ENCODE measurements at regions of chr12 and their contacts with region 1.

Region 1: DNA sequence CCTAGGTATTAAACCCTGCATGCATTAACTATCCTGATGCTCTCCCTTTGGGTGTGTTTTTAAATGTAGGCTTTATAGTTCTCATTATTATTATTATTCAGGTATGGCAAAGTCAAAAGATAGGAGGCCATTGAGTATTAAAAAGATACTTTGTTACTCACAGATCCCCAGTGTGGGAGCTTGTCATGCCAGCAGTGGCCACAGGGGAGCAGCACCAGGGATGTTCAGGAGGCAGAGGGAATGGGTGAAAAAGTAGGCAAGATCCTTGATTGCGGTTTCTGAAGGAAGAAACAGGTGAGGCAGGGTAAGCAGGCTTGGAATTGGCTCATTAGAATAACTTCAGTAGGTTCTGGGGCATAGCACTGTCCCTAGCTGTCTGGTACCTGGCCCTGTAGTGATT is 382.2 kb downstream of the MED13L start:
- DNase-seq: no peak
- ATAC-seq: peak; percentile 78
- H3K4me3 ChIP-seq: no peak overlapping the region
- H3K27ac ChIP-seq: no peak overlapping the region
- H3K4me1 ChIP-seq: no peaks in the 10 kb centered on the region
- H3K27me3 ChIP-seq: no peaks in the 10 kb centered on the region
- CTCF ChIP-seq: peak in 2 of 3 experiments; percentile 70 to 83; a peak in 4 of 6 replicates
- POLR2A ChIP-seq: no peak
- RAD21 ChIP-seq: peak; percentile 34; the same call in 1 of the 2 replicates

Region 2: DNA sequence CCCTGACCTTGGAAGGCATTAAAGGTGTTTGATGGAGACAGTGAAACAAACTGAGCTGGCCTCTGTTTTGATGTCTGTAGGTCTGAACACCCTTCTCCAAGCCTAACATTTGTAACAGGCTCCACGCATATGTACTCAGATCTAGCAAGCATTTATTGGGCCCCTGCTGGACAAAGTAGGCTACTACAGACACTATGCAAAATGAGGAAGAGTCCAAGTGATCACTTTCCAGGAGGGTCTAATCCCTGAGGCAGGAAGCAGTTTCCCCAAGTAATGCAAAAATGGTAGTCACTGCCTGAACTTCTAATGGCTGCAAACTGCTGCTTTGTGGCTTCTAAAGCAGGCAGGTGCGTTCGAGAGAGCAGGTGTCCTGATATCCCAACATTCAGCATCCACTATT is 23.5 kb before region 1 on chr12:
- CTCF ChIA-PET with region 1: interaction called, 12 read pairs
- POLR2A ChIA-PET with region 1: no interaction called
- RAD21 ChIA-PET with region 1: no interaction called
- intact Hi-C with region 1: no loop called
- DNase-seq: peak; percentile 58
- ATAC-seq: peak; percentile 87
- H3K4me3 ChIP-seq: peak overlapping the region in 1 of 2 experiments; percentile 44; a peak in 1 of 4 replicates
- H3K27ac ChIP-seq: peak overlapping the region; percentile 47
- H3K4me1 ChIP-seq: peaks cover 36 to 43% of the 10 kb centered on the region in 2 experiments
- H3K27me3 ChIP-seq: no peaks in the 10 kb centered on the region
- CTCF ChIP-seq: peak; percentile 26 to 81 (median 79); a peak in 5 of 6 replicates
- POLR2A ChIP-seq: no peak
- RAD21 ChIP-seq: 0 out of 2 replicates have a peak, but pooled peaks have one; percentile 23

Region 3: GRCh38 chr12:115910057-115910456 is 14.8 kb after region 1 on chr12:
- CTCF ChIA-PET with region 1: interaction called, 12 read pairs
- POLR2A ChIA-PET with region 1: no interaction called
- RAD21 ChIA-PET with region 1: no interaction called
- intact Hi-C with region 1: no loop called
- DNase-seq: no peak
- ATAC-seq: no peak
- H3K4me3 ChIP-seq: no peak overlapping the region
- H3K27ac ChIP-seq: no peak overlapping the region
- H3K4me1 ChIP-seq: no peaks in the 10 kb centered on the region
- H3K27me3 ChIP-seq: no peaks in the 10 kb centered on the region; the same call in 1 of the 2 replicates
- CTCF ChIP-seq: no peak
- POLR2A ChIP-seq: no peak
- RAD21 ChIP-seq: no peak

Measured in HCT116 (cell line).